ENCODE measurements at regions of chr6 and their contacts with region 1.

Region 1: GRCh38 chr6:117776441-117776840 is 101.2 kb downstream of the NUS1 start:
- DNase-seq: no peak
- CTCF ChIP-seq: no peak

Region 2: GRCh38 chr6:117795248-117795647 is 18.8 kb after region 1 on chr6:
- CTCF ChIA-PET with region 1: interaction called, 13 read pairs
- POLR2A ChIA-PET with region 1: no interaction called
- DNase-seq: no peak
- CTCF ChIP-seq: no peak

Measured in GM10248 (cell line).